Activated naive CD4-positive, alpha-beta T cell treated with anti-CD3 and anti-CD28 coated beads, Interleukin-2, amount 10 ng/mL, durations not matched to agents 7 days and 5 days (primary cell): ENCODE measurements at regions of chr14 and their contacts with region 1.

Region 1: GRCh38 chr14:93939304-93940229 is 12.4 kb downstream of the FAM181A start:
- DNase-seq: peak; percentile 92
- H3K4me3 Mint-ChIP-seq: peak overlapping the region; percentile 62
- H3K27ac Mint-ChIP-seq: peak overlapping the region; percentile 77
- H3K4me1 Mint-ChIP-seq: peaks cover 21% of the 10 kb centered on the region
- H3K27me3 Mint-ChIP-seq: peaks cover 4% of the 10 kb centered on the region

Region 2: DNA sequence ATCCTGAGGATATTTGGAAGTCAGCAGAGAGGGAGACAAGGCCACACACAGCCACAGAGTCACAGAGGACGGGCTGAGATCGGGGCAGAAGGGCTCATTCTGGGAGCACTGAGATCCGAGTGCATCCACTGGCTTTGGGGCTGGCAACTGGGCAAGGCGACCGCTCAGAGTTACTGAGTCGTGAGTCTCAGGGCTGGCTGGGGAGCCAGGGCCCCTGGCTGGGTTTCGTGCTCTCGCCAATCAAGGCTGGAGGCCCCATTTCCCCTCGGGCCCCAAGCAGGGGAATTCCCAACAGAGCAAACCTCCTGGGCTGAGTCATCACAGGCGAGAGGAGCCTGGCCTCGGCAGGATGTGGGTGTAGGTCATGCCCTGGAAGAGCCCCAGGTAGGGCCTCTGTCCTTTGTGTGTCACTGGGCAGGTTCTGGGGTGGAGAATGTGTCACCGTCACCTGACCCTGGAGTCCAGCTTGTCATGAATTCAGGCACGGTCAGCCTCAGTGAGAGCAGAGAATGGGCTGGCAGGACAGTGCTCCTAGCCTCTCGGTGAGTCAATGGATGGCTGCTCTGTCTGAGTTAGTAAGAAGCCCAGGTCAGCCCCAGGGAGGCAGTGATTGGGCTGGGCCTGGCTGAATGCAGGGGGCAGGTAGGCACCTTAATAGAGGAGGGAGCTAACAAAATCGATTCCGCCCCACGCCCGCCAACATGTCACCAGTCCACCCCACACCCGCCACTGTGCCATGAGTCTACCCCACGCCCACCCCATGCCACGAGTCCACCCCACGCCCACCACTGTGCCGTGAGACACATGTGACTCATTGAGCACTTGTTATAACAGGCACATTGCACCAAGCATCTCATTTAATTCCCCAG is 19.9 kb after region 1 on chr14:
- CTCF ChIA-PET with region 1: interaction called, 87 read pairs
- DNase-seq: peak; percentile 95
- H3K4me3 Mint-ChIP-seq: peak overlapping the region; percentile 58
- H3K27ac Mint-ChIP-seq: peak overlapping the region; percentile 96
- H3K4me1 Mint-ChIP-seq: peaks cover 97% of the 10 kb centered on the region
- H3K27me3 Mint-ChIP-seq: peaks cover 4% of the 10 kb centered on the region

Region 3: DNA sequence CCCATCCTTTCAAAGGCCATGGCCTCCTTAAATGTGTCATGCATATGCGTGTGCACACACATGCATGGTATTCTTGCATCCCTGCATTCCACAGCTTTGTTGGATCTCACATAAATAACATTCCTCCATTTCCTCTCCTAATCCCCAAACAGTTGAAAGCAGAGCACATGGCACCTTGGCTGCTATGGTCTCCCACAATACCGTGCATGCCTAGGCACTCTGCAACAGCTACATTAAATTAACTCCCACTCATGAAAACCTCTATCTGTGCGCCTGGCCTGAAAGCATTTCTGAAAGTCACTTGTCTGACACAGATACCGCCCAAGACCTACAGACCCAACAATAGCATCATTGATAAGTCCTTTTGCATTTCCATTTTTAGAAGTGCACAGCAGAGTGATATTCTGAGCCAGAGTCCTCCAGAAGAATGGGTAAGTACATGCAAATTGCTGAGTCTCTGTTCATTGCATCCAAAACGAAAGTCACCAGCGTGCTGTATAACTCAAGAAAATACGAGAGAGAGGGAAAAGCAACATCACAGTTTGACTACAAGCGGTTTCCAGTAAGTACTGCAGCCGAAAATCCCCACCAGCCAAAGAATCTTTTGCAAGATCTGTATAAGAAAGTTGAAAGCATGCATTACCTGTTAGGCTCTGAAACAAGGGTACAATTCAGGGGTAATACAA is 36.4 kb after region 1 on chr14:
- CTCF ChIA-PET with region 1: interaction called, 181 read pairs
- DNase-seq: peak; percentile 42
- H3K4me3 Mint-ChIP-seq: peak overlapping the region; percentile 79
- H3K27ac Mint-ChIP-seq: peak overlapping the region; percentile 95
- H3K4me1 Mint-ChIP-seq: peaks cover 94% of the 10 kb centered on the region
- H3K27me3 Mint-ChIP-seq: no peaks in the 10 kb centered on the region

Region 4: DNA sequence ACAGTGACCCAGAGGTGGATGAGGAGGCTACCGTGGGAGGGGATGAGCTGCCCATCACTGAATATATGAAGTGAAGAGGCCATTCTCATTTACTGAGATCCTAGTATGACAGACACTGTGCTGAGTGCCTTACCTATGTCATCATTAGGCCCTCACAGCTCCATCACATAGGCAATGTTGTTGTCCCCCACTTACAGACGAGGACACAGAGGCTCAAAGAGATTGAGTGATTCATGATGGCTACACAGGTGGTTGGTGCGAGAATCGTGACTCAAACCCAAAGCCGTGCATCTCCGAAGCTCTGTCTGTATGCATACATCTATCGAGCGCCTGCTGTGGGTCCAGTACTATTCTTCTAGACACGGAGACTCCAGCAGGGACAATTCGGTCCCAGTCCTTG is 51.6 kb after region 1 on chr14:
- CTCF ChIA-PET with region 1: interaction called, 186 read pairs
- DNase-seq: no peak
- H3K4me3 Mint-ChIP-seq: no peak overlapping the region
- H3K27ac Mint-ChIP-seq: no peak overlapping the region
- H3K4me1 Mint-ChIP-seq: peaks cover 14% of the 10 kb centered on the region
- H3K27me3 Mint-ChIP-seq: peaks cover 37% of the 10 kb centered on the region

Region 5: DNA sequence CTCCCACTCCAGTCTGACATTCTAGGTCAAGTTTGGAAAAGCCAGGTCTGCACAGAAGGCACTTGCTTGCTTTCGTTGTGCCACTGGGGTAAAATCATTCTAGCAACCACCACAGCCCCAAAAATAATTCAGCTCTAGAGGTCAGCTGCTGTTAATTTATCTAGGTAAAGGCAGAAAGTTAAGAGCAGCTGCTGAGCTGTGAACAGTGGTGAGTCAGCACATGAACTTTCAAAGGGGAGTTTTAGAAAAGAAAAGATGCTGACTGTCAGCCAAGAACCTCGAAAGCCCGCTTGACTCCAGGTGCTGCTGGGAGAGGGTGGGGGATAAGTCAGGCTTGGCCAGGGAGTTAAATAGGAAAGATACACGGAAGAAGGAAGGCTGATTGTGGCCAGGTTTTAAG is 70.2 kb after region 1 on chr14:
- CTCF ChIA-PET with region 1: interaction called, 91 read pairs
- DNase-seq: no peak
- H3K4me3 Mint-ChIP-seq: no peak overlapping the region
- H3K27ac Mint-ChIP-seq: peak overlapping the region; percentile 55
- H3K4me1 Mint-ChIP-seq: peaks cover 86% of the 10 kb centered on the region
- H3K27me3 Mint-ChIP-seq: peaks cover 29% of the 10 kb centered on the region

Region 6: GRCh38 chr14:94129111-94129757 is 189.7 kb after region 1 on chr14 and contains the start of gene IFI27L2:
- CTCF ChIA-PET with region 1: interaction called, 15 read pairs
- DNase-seq: peak; percentile 86
- H3K4me3 Mint-ChIP-seq: peak within 1 kb of the TSS; percentile 85
- H3K27ac Mint-ChIP-seq: peak within 1 kb of the TSS; percentile 88
- H3K4me1 Mint-ChIP-seq: peaks cover 24% of the 10 kb centered on the region
- H3K27me3 Mint-ChIP-seq: peaks cover 11% of the 10 kb centered on the region

Region 7: DNA sequence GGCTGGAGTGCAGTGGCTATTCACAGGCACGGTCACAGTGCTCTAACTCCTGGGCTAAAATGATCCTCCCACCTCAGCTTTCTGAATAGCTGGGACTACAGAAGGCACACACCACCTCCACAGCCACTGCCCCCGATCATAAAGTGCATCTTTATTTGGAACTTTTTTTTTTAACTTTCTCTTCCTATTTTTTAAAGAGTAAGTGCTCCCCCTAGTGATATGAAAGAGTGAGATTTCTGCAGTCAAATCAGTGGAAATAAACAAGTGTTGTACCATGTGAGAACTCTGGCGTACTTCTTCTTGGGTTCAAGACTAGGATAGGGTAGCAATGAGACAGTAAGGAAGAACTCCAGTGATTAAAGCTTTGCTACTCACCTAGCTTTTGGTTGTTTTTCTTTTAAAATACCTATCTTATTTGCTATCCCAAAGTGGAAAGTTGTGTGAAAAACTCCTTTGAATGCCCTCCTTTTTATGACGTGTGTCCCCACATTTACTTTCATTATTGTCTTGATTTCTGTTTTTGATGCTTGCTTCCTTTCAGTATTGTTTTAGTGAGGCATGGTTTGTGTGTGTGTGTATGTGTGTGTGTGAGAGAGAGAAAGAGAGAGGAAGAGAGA is 241.2 kb after region 1 on chr14:
- CTCF ChIA-PET with region 1: interaction called, 22 read pairs
- DNase-seq: peak; percentile 41
- H3K4me3 Mint-ChIP-seq: peak overlapping the region; percentile 44
- H3K27ac Mint-ChIP-seq: peak overlapping the region; percentile 51
- H3K4me1 Mint-ChIP-seq: peaks cover 18% of the 10 kb centered on the region
- H3K27me3 Mint-ChIP-seq: peaks cover 16% of the 10 kb centered on the region

Region 8: GRCh38 chr14:94239406-94239805 is 299.8 kb after region 1 on chr14:
- CTCF ChIA-PET with region 1: no interaction called
- DNase-seq: no peak
- H3K4me3 Mint-ChIP-seq: no peak overlapping the region
- H3K27ac Mint-ChIP-seq: no peak overlapping the region
- H3K4me1 Mint-ChIP-seq: peaks cover 11% of the 10 kb centered on the region
- H3K27me3 Mint-ChIP-seq: no peaks in the 10 kb centered on the region

Region 9: DNA sequence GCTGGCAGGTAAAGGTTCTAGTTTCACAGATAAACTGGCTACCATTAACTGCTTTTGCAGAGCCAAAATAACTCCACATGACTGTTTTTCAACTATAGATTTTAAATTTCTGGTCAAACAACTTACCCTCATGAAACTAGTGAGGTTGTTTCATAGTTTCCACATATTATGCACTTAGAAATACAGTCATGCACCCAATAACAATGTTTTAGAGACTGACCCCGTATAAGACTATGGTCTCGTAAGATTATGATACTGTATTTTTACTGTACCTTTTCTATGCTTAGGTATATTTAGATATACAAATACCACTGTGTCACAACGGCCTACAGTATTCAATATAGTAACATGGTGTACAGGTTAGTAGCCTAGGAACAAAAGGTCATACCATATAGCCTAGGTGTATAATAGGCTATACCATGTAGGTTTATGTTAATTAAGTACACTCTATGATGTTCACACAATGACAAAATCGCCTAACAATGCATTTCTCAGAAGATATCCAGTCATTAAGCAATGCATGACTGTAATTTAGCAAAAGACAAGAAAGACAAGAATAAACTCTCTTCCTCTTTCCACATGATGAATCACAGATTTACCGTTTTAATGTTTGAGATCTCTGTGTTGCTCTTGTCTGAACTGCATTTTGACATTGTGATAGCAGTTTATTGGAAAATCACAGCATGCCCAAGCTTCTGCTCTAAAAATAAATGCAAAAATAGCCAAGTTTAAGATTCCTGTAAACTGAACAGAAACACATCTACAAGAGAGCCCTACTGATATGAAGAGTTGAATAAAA is 1200.7 kb after region 1 on chr14:
- CTCF ChIA-PET with region 1: no interaction called
- DNase-seq: no peak
- H3K4me3 Mint-ChIP-seq: no peak overlapping the region
- H3K27ac Mint-ChIP-seq: no peak overlapping the region
- H3K4me1 Mint-ChIP-seq: peaks cover 42% of the 10 kb centered on the region
- H3K27me3 Mint-ChIP-seq: no peaks in the 10 kb centered on the region